Left lung (tissue), 14 donors: ENCODE measurements at regions of chr1 and their contacts with region 1.

Region 1: DNA sequence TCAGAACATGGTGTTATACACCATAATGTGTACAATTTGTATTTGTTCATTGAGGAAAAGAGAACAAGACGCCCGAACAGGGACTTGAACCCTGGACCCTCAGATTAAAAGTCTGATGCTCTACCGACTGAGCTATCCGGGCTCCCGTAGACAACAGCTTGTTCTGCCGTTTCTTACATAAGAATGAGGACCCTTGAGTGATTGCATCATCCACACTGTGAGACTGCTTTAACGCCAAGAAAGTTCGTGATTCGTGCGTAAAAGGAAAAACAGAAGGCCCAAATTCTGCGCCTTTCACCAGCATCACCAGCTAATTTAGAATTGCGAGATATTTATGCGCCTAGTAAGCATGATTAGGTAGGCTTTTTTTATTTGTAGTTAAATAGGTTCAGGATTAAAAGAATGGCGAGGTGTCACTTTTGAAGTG is 9.2 kb upstream of the MDM4 start:
- DNase-seq: peak in 3 of 4 donors; percentile 68 to 95 (median 95)
- ATAC-seq: peak; percentile 72
- H3K4me3 ChIP-seq: peak overlapping the region; percentile 39 to 59
- H3K27ac ChIP-seq: peak overlapping the region; percentile 83 to 89
- H3K4me1 ChIP-seq: peaks cover 0 to 24% of the 10 kb centered on the region in 2 donors
- H3K27me3 ChIP-seq: no peaks in the 10 kb centered on the region
- CTCF ChIP-seq: no peak

Region 2: DNA sequence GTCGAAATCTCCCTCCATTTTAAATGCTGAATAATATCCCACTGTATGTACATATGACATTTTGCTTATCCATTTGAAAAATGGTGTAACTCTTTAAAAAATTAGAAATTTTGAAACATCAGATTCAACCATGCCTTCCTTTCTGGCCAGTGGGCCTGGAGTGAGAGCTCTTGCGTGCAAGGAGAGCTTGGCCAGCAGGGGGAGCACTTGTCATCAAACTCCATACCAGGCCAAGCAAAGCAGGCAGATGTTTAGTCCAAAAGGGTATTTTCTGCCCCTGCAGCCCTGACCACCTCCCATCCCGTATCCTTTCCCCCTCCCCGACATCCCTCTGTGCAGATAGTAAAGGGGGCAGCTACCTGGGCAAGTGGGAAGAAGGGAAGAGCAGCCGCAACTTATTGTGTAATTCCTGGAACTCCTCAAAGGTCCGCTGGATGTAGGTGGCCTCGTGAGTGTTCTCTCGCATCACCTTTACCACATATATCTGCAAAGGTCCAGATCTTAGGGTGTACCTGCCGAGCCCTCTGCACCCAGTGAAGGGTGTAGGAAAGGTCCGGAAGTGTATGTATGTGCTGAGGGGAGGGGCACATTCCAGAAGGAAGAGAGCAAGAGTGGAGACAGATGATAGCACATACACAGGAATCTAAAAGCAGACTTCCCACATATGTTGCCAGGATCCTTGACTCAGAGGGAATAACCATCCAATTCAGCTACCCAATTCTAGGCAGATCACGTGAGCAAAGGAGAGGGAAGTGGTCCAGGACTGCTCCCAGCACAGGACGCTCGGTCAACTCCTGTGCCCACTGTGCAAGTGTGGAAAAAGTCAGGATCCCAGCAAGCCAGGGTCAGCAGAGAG is 75.4 kb before region 1 on chr1:
- intact Hi-C with region 1: loop called in 1 of 2 experiments (anchors 5 kb)
- DNase-seq: peak; percentile 66 to 87 (median 82)
- ATAC-seq: peak; percentile 89
- H3K4me3 ChIP-seq: no peak overlapping the region
- H3K27ac ChIP-seq: no peak overlapping the region
- H3K4me1 ChIP-seq: peaks cover 0 to 32% of the 10 kb centered on the region in 2 donors
- H3K27me3 ChIP-seq: no peaks in the 10 kb centered on the region
- CTCF ChIP-seq: peak; percentile 90 to 92

Region 3: DNA sequence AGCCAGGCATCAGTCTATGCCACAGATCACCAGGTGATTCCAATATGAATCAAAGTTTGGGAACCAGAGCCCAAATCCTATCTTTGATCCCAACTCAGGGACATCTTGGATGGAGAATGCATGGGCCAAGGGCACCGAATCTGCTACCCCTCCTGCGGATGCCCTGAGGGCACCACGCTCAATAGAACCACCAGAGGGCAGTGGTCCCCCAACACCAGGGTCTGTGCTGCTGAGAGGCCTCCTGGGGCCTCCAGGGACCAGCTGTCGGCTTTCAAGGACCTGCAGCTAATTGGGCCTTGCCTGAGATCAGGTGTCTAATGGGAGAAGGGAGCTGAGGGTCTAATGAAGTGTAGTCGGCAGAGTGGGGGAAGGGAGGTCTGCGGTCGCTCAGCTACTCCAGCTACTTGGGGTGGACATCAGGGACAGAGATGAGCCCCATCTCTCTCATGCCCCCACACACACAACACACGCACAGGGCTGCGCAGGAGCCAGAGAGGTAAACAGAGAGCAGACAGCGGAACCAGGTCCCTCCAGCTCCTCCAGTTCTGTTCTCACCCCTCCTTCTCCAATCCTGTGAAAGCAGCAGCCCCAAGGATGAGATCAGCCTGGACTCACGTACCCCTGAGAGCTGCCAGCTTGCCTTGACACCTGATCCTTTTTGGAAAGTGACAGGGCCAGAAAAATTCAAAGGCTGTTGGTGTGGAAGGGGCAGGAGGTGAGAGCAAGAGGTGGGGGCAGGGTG is 60.4 kb before region 1 on chr1:
- intact Hi-C with region 1: loop called (anchors 5 to 10 kb)
- DNase-seq: peak in 3 of 4 donors; percentile 42 to 76 (median 57)
- ATAC-seq: peak; percentile 56
- H3K4me3 ChIP-seq: no peak overlapping the region
- H3K27ac ChIP-seq: peak overlapping the region in 1 of 2 donors; percentile 37
- H3K4me1 ChIP-seq: peaks cover 8 to 41% of the 10 kb centered on the region in 2 donors
- H3K27me3 ChIP-seq: no peaks in the 10 kb centered on the region
- CTCF ChIP-seq: peak; percentile 64 to 83